ENCODE measurements at regions of chr10 and their contacts with region 1.

Region 1: GRCh38 chr10:91758303-91759146 is 39.7 kb upstream of the TNKS2 start:
- DNase-seq: peak in 1 of 2 experiments; percentile 60
- H3K4me3 ChIP-seq: no peak overlapping the region
- H3K27ac ChIP-seq: no peak overlapping the region
- H3K4me1 ChIP-seq: peaks cover 9% of the 10 kb centered on the region
- H3K27me3 ChIP-seq: no peaks in the 10 kb centered on the region
- CTCF ChIP-seq: peak; percentile 71

Region 2: DNA sequence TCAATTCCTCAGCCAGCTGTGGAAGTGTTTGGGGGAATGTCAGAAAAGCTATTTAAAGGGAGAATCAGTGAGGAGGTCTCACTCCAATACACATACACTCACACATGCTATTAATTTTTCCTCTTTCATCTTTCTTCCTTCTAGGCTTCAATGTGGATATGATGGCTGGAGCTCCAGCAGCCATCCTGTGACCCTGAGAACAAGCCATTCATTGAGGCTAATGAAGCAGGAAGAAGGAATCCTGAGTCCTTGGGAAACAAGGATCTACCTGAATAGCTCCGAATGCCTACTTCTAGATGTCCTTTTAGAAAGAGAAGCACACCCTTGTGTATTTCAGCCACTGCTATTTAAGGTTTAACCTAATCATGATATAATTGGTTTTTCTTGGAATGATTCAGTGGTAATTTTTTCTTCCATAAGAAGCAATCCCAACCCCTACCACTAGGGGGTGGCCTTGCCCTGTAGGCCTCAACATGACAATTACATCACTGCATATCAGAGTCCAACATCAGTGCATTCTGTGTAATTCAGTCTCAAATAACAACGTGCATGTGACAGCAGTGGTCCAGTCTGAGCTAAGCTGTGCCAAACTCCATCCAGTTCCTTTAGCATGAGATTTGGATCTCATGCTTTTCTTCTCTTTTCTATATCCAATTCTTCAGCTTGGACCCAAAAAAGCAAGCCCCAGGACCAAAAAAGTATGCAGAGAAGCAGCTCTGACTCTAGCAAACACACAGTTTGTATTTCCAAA is 752.3 kb before region 1 on chr10:
- CTCF ChIA-PET with region 1: no interaction called
- POLR2A ChIA-PET with region 1: no interaction called
- intact Hi-C with region 1: loop called (anchors 5 kb)
- DNase-seq: peak; percentile 35 to 46
- H3K4me3 ChIP-seq: no peak overlapping the region
- H3K27ac ChIP-seq: no peak overlapping the region
- H3K4me1 ChIP-seq: no peaks in the 10 kb centered on the region
- H3K27me3 ChIP-seq: no peaks in the 10 kb centered on the region
- CTCF ChIP-seq: peak; percentile 88

Region 3: GRCh38 chr10:91579329-91579985 is 179.1 kb before region 1 on chr10:
- CTCF ChIA-PET with region 1: no interaction called
- POLR2A ChIA-PET with region 1: no interaction called
- intact Hi-C with region 1: no loop called
- DNase-seq: no peak
- H3K4me3 ChIP-seq: no peak overlapping the region
- H3K27ac ChIP-seq: no peak overlapping the region
- H3K4me1 ChIP-seq: no peaks in the 10 kb centered on the region
- H3K27me3 ChIP-seq: no peaks in the 10 kb centered on the region
- CTCF ChIP-seq: no peak

Region 4: GRCh38 chr10:91865562-91866081 is 107.1 kb after region 1 on chr10:
- CTCF ChIA-PET with region 1: no interaction called
- POLR2A ChIA-PET with region 1: no interaction called
- intact Hi-C with region 1: no loop called
- DNase-seq: no peak
- H3K4me3 ChIP-seq: no peak overlapping the region
- H3K27ac ChIP-seq: no peak overlapping the region
- H3K4me1 ChIP-seq: no peaks in the 10 kb centered on the region
- H3K27me3 ChIP-seq: no peaks in the 10 kb centered on the region
- CTCF ChIP-seq: no peak

Measured in PC-9 (cell line).